ENCODE measurements at regions of chr2 and their contacts with region 1.

Region 1: DNA sequence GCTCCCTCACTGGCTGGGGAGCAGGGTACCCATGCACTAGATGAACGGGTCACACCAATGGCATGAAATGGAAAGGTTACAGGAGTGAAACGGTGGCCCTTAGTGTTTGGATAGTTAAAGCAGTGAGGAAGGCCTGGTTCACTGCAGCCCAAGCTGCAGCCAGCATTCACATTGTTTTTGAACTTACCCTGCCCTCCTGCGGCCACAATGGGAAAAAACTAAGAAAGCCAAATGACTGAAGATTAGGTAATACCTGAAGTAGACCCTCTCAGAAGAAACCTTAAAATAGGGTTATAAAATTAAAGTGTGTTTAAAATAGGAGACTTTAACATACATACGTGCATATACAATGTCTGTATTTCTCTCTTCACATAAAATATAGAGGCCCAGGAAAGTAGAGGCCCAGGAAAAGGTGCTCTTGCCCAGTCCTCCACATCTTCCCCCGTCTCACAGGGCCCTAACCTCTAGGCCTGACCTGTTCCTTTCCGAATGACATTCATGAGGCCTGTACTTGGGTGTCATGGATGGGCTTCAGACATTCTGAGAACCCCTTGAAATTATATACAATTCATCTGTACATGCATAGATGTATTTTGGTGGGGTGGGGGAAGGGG is 33.3 kb downstream of the DOK1 start:
- DNase-seq: peak; percentile 79
- ATAC-seq: peak; percentile 77
- H3K4me3 Mint-ChIP-seq: no peak overlapping the region
- H3K27ac Mint-ChIP-seq: no peak overlapping the region
- H3K4me1 Mint-ChIP-seq: peaks cover 23% of the 10 kb centered on the region
- H3K27me3 Mint-ChIP-seq: peaks cover 9% of the 10 kb centered on the region
- CTCF ChIP-seq: peak; percentile 71

Region 2: GRCh38 chr2:74458132-74458925 is 129.4 kb before region 1 on chr2 and contains the start of gene WBP1:
- CTCF ChIA-PET with region 1: interaction called, 17 read pairs
- POLR2A ChIA-PET with region 1: no interaction called
- intact Hi-C with region 1: no loop called
- DNase-seq: peak; percentile 100
- ATAC-seq: peak; percentile 84
- H3K4me3 Mint-ChIP-seq: peak within 1 kb of the TSS; percentile 98
- H3K27ac Mint-ChIP-seq: peak within 1 kb of the TSS; percentile 99
- H3K4me1 Mint-ChIP-seq: peaks cover 42% of the 10 kb centered on the region
- H3K27me3 Mint-ChIP-seq: no peaks in the 10 kb centered on the region
- CTCF ChIP-seq: no peak
- total RNA-seq, gene WBP1: 20.3 to 23.0 TPM

Region 3: GRCh38 chr2:74482801-74483674 is 104.7 kb before region 1 on chr2 and contains the starts of genes CCDC142 and TTC31:
- CTCF ChIA-PET with region 1: interaction called, 108 read pairs
- POLR2A ChIA-PET with region 1: interaction called, 27 read pairs
- intact Hi-C with region 1: loop called (anchors 1 kb)
- DNase-seq: peak; percentile 98
- ATAC-seq: peak; percentile 93
- H3K4me3 Mint-ChIP-seq: peak within 1 kb of the TSS; percentile 86
- H3K27ac Mint-ChIP-seq: peak within 1 kb of the TSS; percentile 100
- H3K4me1 Mint-ChIP-seq: peaks cover 25% of the 10 kb centered on the region
- H3K27me3 Mint-ChIP-seq: no peaks in the 10 kb centered on the region
- CTCF ChIP-seq: peak; percentile 83
- total RNA-seq, gene CCDC142: 7.2 to 10.3 TPM
- total RNA-seq, gene TTC31: 20.3 to 21.9 TPM

Region 4: GRCh38 chr2:74529357-74530238 is 58.2 kb before region 1 on chr2 and contains the starts of genes AUP1 and HTRA2:
- CTCF ChIA-PET with region 1: interaction called, 54 read pairs
- POLR2A ChIA-PET with region 1: interaction called, 3 read pairs
- intact Hi-C with region 1: loop called (anchors 5 kb)
- DNase-seq: peak; percentile 98
- ATAC-seq: peak; percentile 86
- H3K4me3 Mint-ChIP-seq: peak within 1 kb of the TSS; percentile 98
- H3K27ac Mint-ChIP-seq: peak within 1 kb of the TSS; percentile 93
- H3K4me1 Mint-ChIP-seq: peaks cover 40% of the 10 kb centered on the region
- H3K27me3 Mint-ChIP-seq: no peaks in the 10 kb centered on the region
- CTCF ChIP-seq: no peak
- total RNA-seq, gene AUP1: 90.8 to 92.7 TPM
- total RNA-seq, gene HTRA2: 42.0 to 45.0 TPM

Region 5: GRCh38 chr2:74553892-74554645 is 33.7 kb before region 1 on chr2 and contains the start of gene LOXL3:
- CTCF ChIA-PET with region 1: interaction called, 11 read pairs
- POLR2A ChIA-PET with region 1: interaction called, 4 read pairs
- intact Hi-C with region 1: no loop called
- DNase-seq: peak; percentile 84
- ATAC-seq: peak; percentile 53
- H3K4me3 Mint-ChIP-seq: peak within 1 kb of the TSS; percentile 88
- H3K27ac Mint-ChIP-seq: peak within 1 kb of the TSS; percentile 90
- H3K4me1 Mint-ChIP-seq: peaks cover 15% of the 10 kb centered on the region
- H3K27me3 Mint-ChIP-seq: peaks cover 27% of the 10 kb centered on the region
- CTCF ChIP-seq: no peak
- total RNA-seq, gene LOXL3: 0.38 to 0.60 TPM

Region 6: GRCh38 chr2:74573747-74574562 is 13.8 kb before region 1 on chr2:
- CTCF ChIA-PET with region 1: interaction called, 54 read pairs
- POLR2A ChIA-PET with region 1: interaction called, 5 read pairs
- intact Hi-C with region 1: no loop called
- DNase-seq: peak; percentile 35
- ATAC-seq: peak; percentile 69
- H3K4me3 Mint-ChIP-seq: peak overlapping the region; percentile 36
- H3K27ac Mint-ChIP-seq: peak overlapping the region; percentile 71
- H3K4me1 Mint-ChIP-seq: peaks cover 26% of the 10 kb centered on the region
- H3K27me3 Mint-ChIP-seq: no peaks in the 10 kb centered on the region
- CTCF ChIP-seq: no peak